B cell (primary cell): ENCODE measurements at regions of chr9 and their contacts with region 1.

Region 1: GRCh38 chr9:121545875-121546423 is 46.3 kb upstream of the GGTA1 start:
- DNase-seq: peak; percentile 77
- ATAC-seq: peak; percentile 87
- H3K4me3 ChIP-seq: no peak overlapping the region
- H3K4me3 Mint-ChIP-seq: no peak overlapping the region
- H3K27ac ChIP-seq: no peak overlapping the region
- H3K27ac Mint-ChIP-seq: no peak overlapping the region
- H3K4me1 ChIP-seq: peaks cover 16% of the 10 kb centered on the region in 2 donors
- H3K4me1 Mint-ChIP-seq: peaks cover 5% of the 10 kb centered on the region
- H3K27me3 ChIP-seq: peaks cover 0 to 38% (median 16%) of the 10 kb centered on the region in 4 experiments
- H3K27me3 Mint-ChIP-seq: peaks cover 29% of the 10 kb centered on the region
- CTCF ChIP-seq: peak; percentile 85

Region 2: GRCh38 chr9:121561385-121562179 is 15.6 kb after region 1 on chr9:
- CTCF ChIA-PET with region 1: interaction called, 10 read pairs
- POLR2A ChIA-PET with region 1: no interaction called
- intact Hi-C with region 1: no loop called
- DNase-seq: no peak
- ATAC-seq: no peak
- H3K4me3 ChIP-seq: no peak overlapping the region
- H3K4me3 Mint-ChIP-seq: no peak overlapping the region
- H3K27ac ChIP-seq: no peak overlapping the region
- H3K27ac Mint-ChIP-seq: no peak overlapping the region
- H3K4me1 ChIP-seq: peaks cover 22 to 30% of the 10 kb centered on the region in 2 donors
- H3K4me1 Mint-ChIP-seq: peaks cover 26% of the 10 kb centered on the region
- H3K27me3 ChIP-seq: peaks cover 0 to 10% (median 0%) of the 10 kb centered on the region in 4 experiments
- H3K27me3 Mint-ChIP-seq: peaks cover 21% of the 10 kb centered on the region
- CTCF ChIP-seq: no peak

Region 3: GRCh38 chr9:121997791-121998190 is 451.8 kb after region 1 on chr9:
- CTCF ChIA-PET with region 1: interaction called, 17 read pairs
- POLR2A ChIA-PET with region 1: no interaction called
- intact Hi-C with region 1: loop called (anchors 1 kb)
- DNase-seq: no peak
- ATAC-seq: no peak
- H3K4me3 ChIP-seq: no peak overlapping the region
- H3K4me3 Mint-ChIP-seq: no peak overlapping the region
- H3K27ac ChIP-seq: no peak overlapping the region
- H3K27ac Mint-ChIP-seq: no peak overlapping the region
- H3K4me1 ChIP-seq: no peaks in the 10 kb centered on the region
- H3K4me1 Mint-ChIP-seq: no peaks in the 10 kb centered on the region
- H3K27me3 ChIP-seq: no peaks in the 10 kb centered on the region
- H3K27me3 Mint-ChIP-seq: no peaks in the 10 kb centered on the region
- CTCF ChIP-seq: no peak

Region 4: DNA sequence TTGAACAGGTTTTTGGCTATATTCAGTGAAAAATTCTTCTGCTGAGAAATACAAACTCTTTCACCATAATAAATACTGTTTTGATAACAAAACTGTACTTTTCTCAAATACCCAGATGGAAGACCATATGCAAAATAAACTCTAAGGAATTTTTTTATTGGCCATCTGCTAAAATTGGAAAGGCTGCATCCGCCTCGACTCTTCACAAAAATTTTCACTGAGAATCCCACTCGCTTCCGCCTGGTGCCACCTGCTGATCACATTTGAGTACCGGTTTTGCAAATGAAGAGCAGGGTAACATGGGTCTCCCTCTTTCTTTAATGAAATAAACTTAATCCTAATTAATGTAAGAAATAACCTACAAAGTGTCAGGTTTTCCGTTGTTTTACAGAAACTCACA is 470.8 kb after region 1 on chr9:
- CTCF ChIA-PET with region 1: interaction called, 5 read pairs
- POLR2A ChIA-PET with region 1: no interaction called
- intact Hi-C with region 1: loop called (anchors 1 kb)
- DNase-seq: no peak
- ATAC-seq: no peak
- H3K4me3 ChIP-seq: no peak overlapping the region
- H3K4me3 Mint-ChIP-seq: no peak overlapping the region
- H3K27ac ChIP-seq: no peak overlapping the region
- H3K27ac Mint-ChIP-seq: no peak overlapping the region
- H3K4me1 ChIP-seq: no peaks in the 10 kb centered on the region
- H3K4me1 Mint-ChIP-seq: no peaks in the 10 kb centered on the region
- H3K27me3 ChIP-seq: peaks cover 0 to 2% (median 0%) of the 10 kb centered on the region in 4 experiments
- H3K27me3 Mint-ChIP-seq: peaks cover 9% of the 10 kb centered on the region
- CTCF ChIP-seq: no peak